ENCODE measurements at regions of chr1 and their contacts with region 1.

Region 1: DNA sequence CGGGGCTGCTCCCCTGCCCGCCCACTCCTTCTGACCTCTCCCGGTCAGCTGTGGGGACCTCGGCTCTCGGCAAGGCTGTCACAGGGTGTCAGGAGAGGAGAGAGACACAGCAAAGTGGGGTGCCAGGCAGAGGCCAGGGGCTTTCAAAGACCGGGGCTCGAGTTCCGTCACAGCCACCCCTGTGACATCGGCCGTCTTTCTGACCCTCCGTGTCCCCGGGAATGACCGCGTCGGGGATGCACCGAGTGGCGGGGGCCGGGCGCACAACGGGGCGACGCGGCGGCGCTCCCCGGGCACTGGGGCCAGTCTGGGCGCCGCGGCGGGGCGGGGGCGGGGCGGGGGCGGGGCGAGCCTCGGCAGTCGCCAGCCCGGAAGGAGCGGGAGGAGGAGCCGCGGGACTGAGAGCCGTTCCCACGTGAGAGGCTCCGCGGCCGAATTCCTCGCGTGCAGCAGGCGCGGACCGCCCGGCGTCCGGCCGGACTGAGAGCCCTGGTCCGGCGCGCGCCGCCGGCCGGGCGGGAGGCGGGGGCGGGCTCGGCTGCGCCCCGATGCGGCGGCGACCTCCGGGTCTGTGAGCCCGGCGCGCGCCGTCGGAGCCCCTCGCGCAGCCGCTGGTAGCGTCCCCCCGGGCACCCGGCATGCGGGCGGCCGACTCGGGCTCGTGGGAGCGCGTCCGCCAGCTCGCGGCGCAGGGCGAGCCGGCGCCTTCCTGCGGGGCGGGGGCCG is 229.7 kb upstream of the TMEM51 start:
- DNase-seq: peak; percentile 26
- H3K4me3 Mint-ChIP-seq: peak overlapping the region; percentile 66
- H3K27ac Mint-ChIP-seq: no peak overlapping the region
- H3K4me1 Mint-ChIP-seq: peaks cover 4% of the 10 kb centered on the region
- H3K27me3 Mint-ChIP-seq: peaks cover 35% of the 10 kb centered on the region

Region 2: DNA sequence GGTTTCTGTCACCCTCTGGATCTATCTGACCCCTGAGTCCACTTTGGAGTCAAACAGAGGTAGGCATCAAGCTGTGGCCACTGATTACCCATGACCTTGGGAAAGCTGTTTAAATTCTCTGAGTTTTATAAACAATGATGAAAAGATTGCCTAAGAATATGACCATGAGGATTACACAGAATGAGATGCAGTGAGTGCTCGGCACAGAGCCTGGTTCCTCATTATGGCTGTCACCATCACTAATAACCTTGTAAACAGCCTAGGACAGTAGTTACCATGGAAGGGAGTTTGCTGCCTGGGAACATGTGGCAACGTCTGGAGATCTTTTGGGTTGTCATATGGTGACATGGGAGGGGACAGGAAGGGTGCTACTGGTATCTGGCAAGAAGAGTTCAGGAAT is 573.7 kb before region 1 on chr1:
- intact Hi-C with region 1: no loop called
- DNase-seq: no peak
- H3K4me3 Mint-ChIP-seq: no peak overlapping the region
- H3K27ac Mint-ChIP-seq: no peak overlapping the region
- H3K4me1 Mint-ChIP-seq: no peaks in the 10 kb centered on the region
- H3K27me3 Mint-ChIP-seq: no peaks in the 10 kb centered on the region

Region 3: GRCh38 chr1:15603050-15603965 is 679.4 kb after region 1 on chr1:
- intact Hi-C with region 1: loop called (anchors 5 kb)
- DNase-seq: peak; percentile 92
- H3K4me3 Mint-ChIP-seq: peak overlapping the region; percentile 69
- H3K27ac Mint-ChIP-seq: no peak overlapping the region
- H3K4me1 Mint-ChIP-seq: peaks cover 10% of the 10 kb centered on the region
- H3K27me3 Mint-ChIP-seq: peaks cover 4% of the 10 kb centered on the region

Measured in activated T-helper 2 cell treated with anti-CD3 and anti-CD28 coated beads, Interferon-gamma antibody, Interleukin-2, Interleukin-4, amounts not matched to agents 10 μg/mL and 5 μg/mL and 100 μg/mL, durations not matched to agents 14 hours and 24 hours and 36 hours (primary cell).